AG04449 (cell line): ENCODE measurements at regions of chr20 and their contacts with region 1.

Region 1: DNA sequence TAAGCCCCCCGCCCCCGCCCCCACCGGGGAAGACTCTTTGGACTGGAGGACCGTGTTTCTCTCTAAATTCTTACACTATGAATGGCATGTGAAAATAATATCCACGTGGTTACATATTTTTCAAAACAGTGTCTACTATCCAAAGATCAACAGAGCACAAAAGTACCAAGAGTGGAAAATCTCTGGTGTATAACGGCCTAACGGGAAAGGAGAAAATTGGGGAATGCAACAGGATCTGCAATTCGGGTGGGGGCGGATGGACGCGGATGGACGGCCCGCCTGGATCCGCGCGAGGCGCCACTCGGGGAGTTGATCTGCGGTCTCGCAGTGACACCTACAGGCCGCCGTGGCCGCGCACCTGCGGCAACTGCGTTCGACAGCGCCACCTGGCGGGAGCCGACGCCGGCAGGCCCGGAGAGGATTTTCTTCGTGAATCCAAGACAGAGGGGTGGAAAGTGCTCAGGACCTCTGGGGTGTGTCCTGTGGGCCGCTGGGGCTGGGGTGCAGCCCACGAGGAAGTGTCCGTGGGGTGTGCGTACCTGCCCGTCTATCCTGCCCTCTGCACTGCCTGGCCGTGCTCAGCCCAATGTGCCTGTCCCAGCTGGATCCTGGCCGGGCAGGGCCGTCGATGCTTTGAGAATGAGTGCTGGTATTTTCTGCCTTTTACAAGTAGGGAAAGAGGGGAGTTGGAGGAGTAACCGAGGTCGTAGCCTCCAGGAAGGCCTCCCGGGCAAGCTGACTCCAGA is 18.6 kb downstream of the ANKRD60 start:
- DNase-seq: no peak
- H3K4me3 ChIP-seq: no peak overlapping the region
- CTCF ChIP-seq: peak; percentile 100

Region 2: DNA sequence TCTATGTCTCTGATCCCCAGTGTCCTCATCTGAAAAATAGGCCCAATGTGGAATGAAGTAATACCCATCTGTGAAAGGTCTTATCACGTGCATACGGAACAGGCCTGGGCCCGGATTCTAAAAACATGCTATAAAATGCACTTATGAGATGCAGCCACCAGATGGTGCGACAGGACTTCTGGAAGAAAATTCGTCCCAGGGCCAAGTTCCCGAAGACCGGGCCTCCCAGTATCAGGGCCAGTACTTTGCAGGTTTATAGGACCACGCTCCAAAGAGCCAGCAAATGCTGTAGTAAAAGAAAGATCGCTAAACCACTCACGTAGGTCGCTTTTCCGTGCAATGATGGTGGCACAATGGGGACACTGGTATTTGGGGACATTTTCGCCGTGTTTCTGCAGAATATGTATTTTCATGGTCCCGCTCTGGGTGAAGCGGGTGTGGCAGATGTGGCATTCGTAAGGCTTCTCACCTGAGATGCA is 695.5 kb before region 1 on chr20:
- CTCF ChIA-PET with region 1: interaction called, 106 read pairs
- POLR2A ChIA-PET with region 1: no interaction called
- DNase-seq: peak; percentile 12
- H3K4me3 ChIP-seq: no peak overlapping the region
- CTCF ChIP-seq: peak; percentile 69

Region 3: GRCh38 chr20:57596998-57597939 is 612.6 kb before region 1 on chr20:
- CTCF ChIA-PET with region 1: interaction called, 270 read pairs
- POLR2A ChIA-PET with region 1: no interaction called
- DNase-seq: no peak
- H3K4me3 ChIP-seq: no peak overlapping the region
- CTCF ChIP-seq: peak; percentile 90

Region 4: DNA sequence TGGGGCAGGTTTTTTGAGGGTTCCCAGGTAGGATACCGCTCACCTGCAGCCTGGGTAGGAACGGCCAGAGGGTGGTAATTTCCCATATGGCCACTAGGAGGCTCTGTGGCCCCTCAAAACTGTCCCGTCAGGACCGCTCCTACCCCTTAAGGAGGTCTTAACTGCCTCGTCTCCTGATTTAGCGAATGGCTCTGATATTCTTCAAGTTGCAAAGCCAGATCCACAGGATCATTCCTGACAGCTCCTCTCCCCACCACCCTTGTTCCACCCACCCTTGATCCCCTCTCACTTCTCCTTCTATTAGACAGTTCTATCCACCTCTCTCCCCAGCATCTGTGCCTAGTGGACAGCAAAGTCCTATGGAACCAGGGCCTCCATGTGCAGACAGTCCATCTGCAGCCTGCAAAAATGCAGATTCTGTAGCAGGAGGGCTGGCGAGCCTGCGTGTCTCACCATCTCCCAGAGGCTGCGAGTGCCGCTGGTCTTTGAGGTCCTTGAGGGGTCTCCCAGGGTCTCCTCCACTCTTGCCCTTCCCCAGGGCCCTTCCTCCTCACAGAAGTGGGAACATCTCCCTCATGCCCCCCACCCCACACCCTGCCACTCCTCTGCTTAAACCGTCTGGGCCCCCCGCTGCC is 555.3 kb before region 1 on chr20:
- CTCF ChIA-PET with region 1: interaction called, 10 read pairs
- POLR2A ChIA-PET with region 1: no interaction called
- DNase-seq: no peak
- H3K4me3 ChIP-seq: no peak overlapping the region
- CTCF ChIP-seq: peak; percentile 89

Region 5: GRCh38 chr20:58196008-58196820 is 13.6 kb before region 1 on chr20:
- CTCF ChIA-PET with region 1: interaction called, 13 read pairs
- POLR2A ChIA-PET with region 1: no interaction called
- DNase-seq: no peak
- H3K4me3 ChIP-seq: no peak overlapping the region
- CTCF ChIP-seq: no peak

Region 6: DNA sequence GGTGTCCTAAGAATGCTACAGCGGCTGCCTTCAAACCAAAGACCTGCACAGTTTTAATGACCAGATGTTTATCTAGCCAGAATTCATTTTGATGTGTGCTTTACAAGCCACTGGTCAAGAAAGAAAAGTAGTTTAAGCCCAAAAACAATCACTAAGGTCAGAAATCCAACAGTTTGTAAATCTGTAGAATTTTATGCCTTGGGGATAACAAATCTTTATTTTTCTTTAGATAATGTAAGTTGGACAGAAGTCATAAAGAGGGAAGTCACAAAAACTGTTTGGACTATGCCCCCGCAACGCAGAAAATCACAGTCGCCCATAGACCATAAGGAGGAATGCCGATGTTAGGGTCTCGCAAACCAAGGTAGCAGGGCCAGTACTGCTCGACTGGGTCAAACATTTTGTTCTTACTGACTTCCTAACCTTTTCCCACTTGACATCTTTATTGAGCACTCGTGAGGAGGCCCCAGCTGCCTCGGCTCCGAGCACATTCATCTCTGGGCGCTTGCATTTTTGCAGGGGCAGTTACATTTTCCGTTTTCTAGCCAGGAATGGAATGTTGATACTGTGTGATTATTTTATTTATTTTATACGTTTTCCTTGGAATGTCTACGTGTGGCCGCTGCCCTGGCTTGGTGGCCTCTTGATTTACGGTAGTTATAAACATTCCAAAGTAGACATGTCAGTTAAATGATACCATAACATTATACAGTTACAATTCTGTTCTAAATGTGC is 362.0 kb after region 1 on chr20:
- CTCF ChIA-PET with region 1: no interaction called
- POLR2A ChIA-PET with region 1: no interaction called
- DNase-seq: peak; percentile 69
- H3K4me3 ChIP-seq: no peak overlapping the region
- CTCF ChIP-seq: no peak